A549 (cell line): ENCODE measurements at regions of chr6 and their contacts with region 1.

Region 1: DNA sequence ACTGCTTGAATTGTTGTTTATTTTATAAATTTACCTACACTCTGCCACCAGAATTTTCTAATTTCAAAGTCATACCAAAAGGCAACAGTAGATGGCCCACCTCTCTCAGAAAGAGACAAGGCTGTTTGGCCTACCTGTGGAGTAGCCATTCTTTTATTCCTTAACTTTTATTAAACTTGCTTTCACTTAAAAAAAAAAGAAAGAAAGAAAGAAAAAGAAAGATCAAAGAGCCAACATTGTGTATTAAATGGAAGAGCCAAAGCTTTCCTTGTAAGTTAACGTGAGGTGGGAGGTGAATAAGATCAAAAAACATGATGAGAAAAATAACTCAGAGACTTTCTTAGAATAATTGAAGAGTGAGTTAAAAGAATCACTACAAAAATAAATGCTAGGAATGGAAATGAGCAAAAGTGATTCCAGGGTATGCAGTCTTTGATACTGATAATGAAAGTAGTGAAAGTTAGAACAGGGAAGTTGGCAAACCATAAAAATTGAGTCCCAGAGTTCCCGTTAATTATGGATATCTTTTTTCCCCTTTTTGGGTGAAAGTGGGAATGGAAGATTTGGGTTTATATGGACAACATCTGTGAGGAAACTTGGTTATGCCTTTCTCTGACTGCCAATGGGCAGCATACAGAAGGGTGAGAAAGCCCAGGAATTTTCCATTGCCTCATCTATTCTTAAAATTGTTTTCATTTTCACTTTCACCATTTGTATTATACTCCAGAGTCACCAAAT is 35.9 kb upstream of the MYB start:
- DNase-seq: peak in 1 of 2 experiments; percentile 17
- ATAC-seq: 0 out of 6 replicates have a peak, but pooled peaks of 1 of the 2 experiments have one; percentile 51
- H3K4me3 ChIP-seq: no peak overlapping the region
- H3K27ac ChIP-seq: no peak overlapping the region
- H3K4me1 ChIP-seq: 0 out of 3 replicates have a peak, but pooled peaks cover 2% of the 10 kb centered on the region
- CTCF ChIP-seq: peak; percentile 63
- EP300 ChIP-seq: no peak
- POLR2A ChIP-seq: no peak
- RAD21 ChIP-seq: peak; percentile 67 to 71

Region 2: GRCh38 chr6:135159531-135159930 is 14.3 kb after region 1 on chr6:
- CTCF ChIA-PET with region 1: interaction called, 12 read pairs
- POLR2A ChIA-PET with region 1: no interaction called
- DNase-seq: no peak
- ATAC-seq: no peak
- H3K4me3 ChIP-seq: no peak overlapping the region
- H3K27ac ChIP-seq: no peak overlapping the region
- H3K4me1 ChIP-seq: no peaks in the 10 kb centered on the region
- CTCF ChIP-seq: no peak
- EP300 ChIP-seq: no peak
- POLR2A ChIP-seq: no peak
- RAD21 ChIP-seq: no peak

Region 3: GRCh38 chr6:135423649-135424128 is 278.5 kb after region 1 on chr6:
- CTCF ChIA-PET with region 1: interaction called, 12 read pairs
- POLR2A ChIA-PET with region 1: no interaction called
- DNase-seq: peak; percentile 8 to 23
- ATAC-seq: peak; percentile 76 to 77; a peak in 4 of 6 replicates
- H3K4me3 ChIP-seq: no peak overlapping the region
- H3K27ac ChIP-seq: no peak overlapping the region
- H3K4me1 ChIP-seq: 0 out of 3 replicates have a peak, but pooled peaks cover 6% of the 10 kb centered on the region
- CTCF ChIP-seq: peak; percentile 63
- EP300 ChIP-seq: no peak
- POLR2A ChIP-seq: no peak
- RAD21 ChIP-seq: peak; percentile 62 to 64